HepG2 (cell line): ENCODE measurements at regions of chr9 and their contacts with region 1.

Region 1: DNA sequence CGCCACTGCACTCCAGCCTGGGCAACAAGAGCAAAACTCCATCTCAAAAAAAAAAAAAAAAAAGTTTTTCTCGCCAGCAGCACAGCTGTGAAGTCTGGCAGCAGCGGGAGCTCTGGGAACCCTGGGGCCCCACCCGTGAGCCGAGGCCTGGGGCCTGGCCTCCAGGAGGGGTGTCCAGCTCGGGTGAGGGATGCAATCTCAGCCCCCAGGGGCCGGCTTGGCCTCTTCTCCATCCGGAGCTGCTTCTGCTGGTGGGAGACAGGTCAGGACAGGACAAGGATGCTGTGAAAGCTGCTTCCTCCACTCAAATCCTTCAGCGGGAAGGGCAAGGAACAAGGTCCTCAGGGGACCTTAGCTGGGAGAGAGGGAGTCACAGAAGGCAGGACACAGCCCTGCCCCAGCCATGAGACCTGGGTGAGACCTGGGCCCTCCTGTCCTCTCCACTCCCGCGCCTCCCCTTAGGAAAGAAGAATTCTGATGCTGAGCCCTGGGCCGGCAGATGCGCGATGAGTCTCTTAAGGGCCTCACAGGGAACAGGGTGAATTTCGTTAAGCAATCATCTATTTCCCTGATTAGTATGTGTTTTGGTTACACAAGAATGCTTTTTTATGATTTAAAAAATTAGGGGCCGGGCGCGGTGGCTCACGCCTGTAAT is 30.6 kb downstream of the PLPP7 start:
- DNase-seq: no peak
- ATAC-seq: no peak
- H3K4me3 ChIP-seq: no peak overlapping the region
- H3K27ac ChIP-seq: no peak overlapping the region
- H3K4me1 ChIP-seq: peaks cover 49% of the 10 kb centered on the region
- H3K27me3 ChIP-seq: peaks cover 0 to 13% of the 10 kb centered on the region in 2 experiments; a peak in 3 of 5 replicates
- CTCF ChIP-seq: no peak
- EP300 ChIP-seq: no peak
- POLR2A ChIP-seq: no peak
- RAD21 ChIP-seq: no peak

Region 2: GRCh38 chr9:131239307-131239975 is 80.7 kb before region 1 on chr9:
- CTCF ChIA-PET with region 1: no interaction called
- POLR2A ChIA-PET with region 1: no interaction called
- in situ Hi-C with region 1: no loop called
- intact Hi-C with region 1: no loop called
- DNase-seq: no peak
- ATAC-seq: peak; percentile 38
- H3K4me3 ChIP-seq: no peak overlapping the region; a peak in 1 of 6 replicates
- H3K27ac ChIP-seq: no peak overlapping the region
- H3K4me1 ChIP-seq: peaks cover 32% of the 10 kb centered on the region
- H3K27me3 ChIP-seq: no peaks in the 10 kb centered on the region
- CTCF ChIP-seq: no peak
- EP300 ChIP-seq: no peak
- POLR2A ChIP-seq: no peak
- RAD21 ChIP-seq: no peak

Region 3: DNA sequence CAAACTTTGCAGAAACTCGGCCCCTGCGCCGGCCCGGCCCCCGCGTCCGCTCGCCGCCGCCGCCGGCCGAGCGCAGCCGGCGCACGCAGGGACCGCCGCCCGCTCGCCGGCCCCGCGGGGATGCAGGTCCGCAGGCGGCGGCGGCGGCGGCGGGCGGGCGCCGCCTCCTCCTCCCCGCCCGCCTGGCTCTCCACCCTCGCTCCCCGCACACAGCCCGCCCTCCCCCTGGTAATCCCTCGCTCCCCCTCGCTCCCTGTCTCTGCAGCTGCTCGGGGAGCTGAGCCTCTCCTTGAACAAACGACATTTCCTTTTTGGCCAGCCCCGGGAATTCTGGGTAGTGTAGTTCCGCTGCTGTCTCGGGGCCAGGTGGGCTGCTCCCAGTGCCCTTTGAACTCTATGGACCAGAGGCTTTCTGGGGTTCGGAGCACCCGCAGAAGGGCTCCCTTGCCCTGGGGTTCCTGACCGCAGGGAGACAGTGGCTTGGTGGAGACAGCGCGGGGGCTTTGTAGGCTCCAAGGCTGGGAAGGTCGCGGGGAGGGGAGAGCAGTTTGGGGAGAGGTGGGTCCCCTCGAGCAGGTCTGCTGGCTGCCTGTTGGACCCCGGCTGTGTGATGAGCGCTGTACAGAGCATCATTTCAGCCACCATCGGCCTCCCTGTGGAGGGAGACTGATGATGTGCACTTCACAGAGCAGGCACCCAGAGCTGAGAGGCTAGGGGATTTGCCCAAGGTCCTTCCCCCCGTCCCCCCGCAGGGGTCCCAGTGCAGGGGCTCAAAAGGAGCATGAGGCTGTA is 42.1 kb before region 1 on chr9:
- CTCF ChIA-PET with region 1: no interaction called
- POLR2A ChIA-PET with region 1: no interaction called
- in situ Hi-C with region 1: no loop called
- intact Hi-C with region 1: loop called (anchors 10 kb)
- DNase-seq: peak; percentile 43
- ATAC-seq: peak; percentile 28
- H3K4me3 ChIP-seq: peak overlapping the region; percentile 45 to 68 (median 52); a peak in 4 of 6 replicates
- H3K27ac ChIP-seq: no peak overlapping the region
- H3K4me1 ChIP-seq: peaks cover 40% of the 10 kb centered on the region
- H3K27me3 ChIP-seq: peaks cover 22 to 85% of the 10 kb centered on the region in 2 experiments
- CTCF ChIP-seq: no peak
- EP300 ChIP-seq: no peak
- POLR2A ChIP-seq: no peak
- RAD21 ChIP-seq: no peak

Region 4: GRCh38 chr9:131481441-131482342 is 161.5 kb after region 1 on chr9:
- CTCF ChIA-PET with region 1: no interaction called
- POLR2A ChIA-PET with region 1: no interaction called
- in situ Hi-C with region 1: no loop called
- intact Hi-C with region 1: no loop called
- DNase-seq: no peak
- ATAC-seq: no peak
- H3K4me3 ChIP-seq: no peak overlapping the region
- H3K27ac ChIP-seq: no peak overlapping the region
- H3K4me1 ChIP-seq: no peaks in the 10 kb centered on the region
- H3K27me3 ChIP-seq: no peaks in the 10 kb centered on the region
- CTCF ChIP-seq: no peak
- EP300 ChIP-seq: no peak
- POLR2A ChIP-seq: no peak; a peak in 1 of 4 replicates
- RAD21 ChIP-seq: no peak